A549 (cell line): ENCODE measurements at regions of chr11 and their contacts with region 1.

Region 1: DNA sequence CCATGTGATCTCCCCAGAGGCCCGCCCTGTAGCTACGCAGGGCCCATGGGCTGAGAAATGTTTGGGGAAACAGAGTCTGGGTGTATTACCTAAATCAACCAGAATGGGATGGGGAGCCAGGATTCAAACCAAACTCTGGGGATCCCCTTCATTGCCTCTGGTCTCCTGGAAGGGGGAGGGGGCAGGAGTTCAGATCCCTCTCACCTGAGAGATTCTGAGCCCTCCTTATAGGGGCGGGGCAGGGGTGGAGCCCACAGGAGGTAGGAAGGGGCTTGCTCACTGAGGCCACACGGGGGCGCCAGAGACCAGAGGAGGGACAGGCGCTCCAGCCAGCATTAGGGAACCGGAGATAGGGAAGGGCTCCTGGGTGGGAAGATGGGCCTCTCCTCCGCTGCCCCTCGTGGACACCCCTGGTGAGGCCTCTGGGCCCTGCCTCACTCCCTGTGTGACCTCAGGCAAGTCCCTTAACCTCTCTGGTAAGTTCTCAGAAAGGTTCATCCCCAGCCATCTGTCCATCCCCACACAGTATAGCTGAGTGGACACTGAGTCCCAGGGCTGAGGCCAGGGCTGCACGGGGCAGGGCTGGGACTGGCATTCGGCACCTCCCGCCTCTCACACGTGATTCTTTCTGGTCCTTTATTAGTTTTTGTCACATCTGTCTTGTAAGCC is 2.7 kb upstream of the CDC42BPG start:
- DNase-seq: peak; percentile 93 to 95
- ATAC-seq: peak; percentile 69 to 86
- H3K4me3 ChIP-seq: no peak overlapping the region
- H3K27ac ChIP-seq: peak overlapping the region; percentile 57 to 92
- H3K4me1 ChIP-seq: peaks cover 74% of the 10 kb centered on the region
- CTCF ChIP-seq: peak; percentile 98
- EP300 ChIP-seq: no peak
- POLR2A ChIP-seq: no peak
- RAD21 ChIP-seq: peak; percentile 99

Region 2: DNA sequence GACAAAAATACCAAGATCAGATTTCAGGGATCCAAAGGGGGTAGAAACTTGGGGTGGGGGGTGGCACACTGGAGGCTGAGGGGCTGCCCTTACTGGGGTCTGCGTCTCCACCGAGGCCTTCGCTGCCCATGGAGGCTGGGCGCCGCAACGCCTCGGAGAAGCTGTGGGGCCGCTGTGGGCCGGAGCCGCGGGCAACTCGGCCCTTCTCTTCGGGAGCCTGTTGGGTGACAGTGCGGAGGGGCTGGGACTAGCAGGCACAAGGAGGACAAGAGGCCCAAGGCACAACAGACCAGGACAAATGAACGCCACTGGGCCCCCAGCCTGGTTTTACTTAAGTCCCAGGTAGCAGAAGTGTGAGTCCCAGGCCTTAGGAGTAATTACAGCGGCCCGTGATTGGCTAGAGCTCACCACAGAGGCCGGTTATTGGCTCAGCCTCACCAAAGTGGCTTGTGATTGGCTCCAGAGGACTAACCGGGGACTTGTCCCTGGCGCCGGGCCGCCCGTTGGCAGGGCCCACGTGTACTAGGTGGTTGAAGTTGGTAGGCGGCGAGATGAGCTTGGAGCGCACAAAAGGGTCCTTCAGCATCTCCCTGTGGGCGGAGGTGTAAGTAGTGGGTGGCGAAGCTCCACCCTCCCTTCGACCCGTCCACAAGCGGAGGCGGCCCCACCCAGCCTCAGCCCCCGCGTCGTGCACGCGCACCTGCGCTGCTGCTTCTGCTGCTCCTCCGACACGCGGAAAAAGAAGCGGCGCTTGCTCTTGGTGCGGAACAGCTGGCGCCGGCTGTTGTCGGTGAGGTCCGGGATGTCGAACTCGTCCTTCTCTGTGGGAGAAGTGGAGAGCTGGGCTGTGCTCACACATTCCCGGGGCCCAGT is 20.3 kb before region 1 on chr11:
- CTCF ChIA-PET with region 1: interaction called, 13 read pairs
- POLR2A ChIA-PET with region 1: no interaction called
- DNase-seq: no peak
- ATAC-seq: peak in 1 of 2 experiments; percentile 54; a peak in 3 of 6 replicates
- H3K4me3 ChIP-seq: no peak overlapping the region
- H3K27ac ChIP-seq: no peak overlapping the region
- H3K4me1 ChIP-seq: no peaks in the 10 kb centered on the region
- CTCF ChIP-seq: no peak
- EP300 ChIP-seq: no peak
- POLR2A ChIP-seq: no peak
- RAD21 ChIP-seq: no peak

Region 3: GRCh38 chr11:64864473-64865285 is 17.5 kb after region 1 on chr11:
- CTCF ChIA-PET with region 1: interaction called, 462 read pairs
- POLR2A ChIA-PET with region 1: no interaction called
- DNase-seq: no peak
- ATAC-seq: no peak
- H3K4me3 ChIP-seq: no peak overlapping the region
- H3K27ac ChIP-seq: peak overlapping the region; percentile 22 to 73; a peak in 5 of 6 replicates
- H3K4me1 ChIP-seq: peaks cover 54% of the 10 kb centered on the region
- CTCF ChIP-seq: no peak
- EP300 ChIP-seq: no peak
- POLR2A ChIP-seq: no peak
- RAD21 ChIP-seq: no peak

Region 4: DNA sequence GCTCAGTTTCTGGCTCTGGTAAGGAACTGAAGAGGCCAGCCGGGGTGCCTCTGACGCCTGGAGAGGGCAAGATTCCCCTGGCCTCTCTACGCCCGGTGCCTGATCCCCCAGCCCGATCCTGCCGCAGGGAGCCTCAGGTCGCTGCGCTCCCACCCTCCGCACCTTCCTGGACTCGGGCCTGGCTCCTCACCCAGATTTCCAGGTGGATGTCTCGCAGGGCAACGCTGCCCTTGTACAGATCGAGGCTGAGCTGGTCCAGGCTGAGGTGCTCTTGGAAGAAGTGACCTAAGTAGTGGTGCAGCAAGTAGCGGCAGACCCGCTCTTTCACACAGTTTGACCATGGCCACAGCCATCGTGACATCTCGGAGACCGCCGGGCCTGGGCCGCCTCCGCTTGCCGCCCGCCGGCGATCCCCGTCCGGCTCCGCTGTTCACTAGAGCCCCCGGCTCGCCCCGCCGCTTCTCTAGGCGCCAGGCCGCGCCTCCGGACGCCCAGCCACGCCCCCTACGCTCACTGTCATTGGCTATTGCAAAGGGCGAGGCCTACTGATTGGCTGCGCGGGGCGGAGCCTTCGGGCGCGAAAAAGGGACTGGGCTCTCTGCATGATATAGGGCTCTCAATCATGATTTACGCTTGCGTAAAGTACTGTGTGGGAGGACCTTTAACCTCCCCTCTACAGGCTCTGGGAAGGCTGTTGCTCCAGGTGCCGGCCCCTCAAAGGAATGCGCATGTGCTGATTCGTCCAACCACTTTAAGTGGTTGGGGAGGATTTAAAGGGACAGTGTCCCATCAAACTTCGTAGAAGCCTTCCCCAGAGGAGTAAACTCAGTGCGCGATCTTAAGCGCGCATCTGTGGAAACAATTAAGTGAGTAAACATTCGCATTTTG is 69.9 kb after region 1 on chr11 and contains the start of gene ATG2A:
- CTCF ChIA-PET with region 1: interaction called, 11 read pairs
- POLR2A ChIA-PET with region 1: no interaction called
- DNase-seq: peak; percentile 99
- ATAC-seq: peak; percentile 91 to 97
- H3K4me3 ChIP-seq: peak within 1 kb of the TSS; percentile 70
- H3K27ac ChIP-seq: peak within 1 kb of the TSS; percentile 77 to 91
- H3K4me1 ChIP-seq: peaks cover 15% of the 10 kb centered on the region
- CTCF ChIP-seq: no peak
- EP300 ChIP-seq: no peak
- POLR2A ChIP-seq: peak; percentile 79
- RAD21 ChIP-seq: no peak
- polyA plus RNA-seq, gene ATG2A: 3.1 and 4.0 TPM in 2 replicates

Region 5: DNA sequence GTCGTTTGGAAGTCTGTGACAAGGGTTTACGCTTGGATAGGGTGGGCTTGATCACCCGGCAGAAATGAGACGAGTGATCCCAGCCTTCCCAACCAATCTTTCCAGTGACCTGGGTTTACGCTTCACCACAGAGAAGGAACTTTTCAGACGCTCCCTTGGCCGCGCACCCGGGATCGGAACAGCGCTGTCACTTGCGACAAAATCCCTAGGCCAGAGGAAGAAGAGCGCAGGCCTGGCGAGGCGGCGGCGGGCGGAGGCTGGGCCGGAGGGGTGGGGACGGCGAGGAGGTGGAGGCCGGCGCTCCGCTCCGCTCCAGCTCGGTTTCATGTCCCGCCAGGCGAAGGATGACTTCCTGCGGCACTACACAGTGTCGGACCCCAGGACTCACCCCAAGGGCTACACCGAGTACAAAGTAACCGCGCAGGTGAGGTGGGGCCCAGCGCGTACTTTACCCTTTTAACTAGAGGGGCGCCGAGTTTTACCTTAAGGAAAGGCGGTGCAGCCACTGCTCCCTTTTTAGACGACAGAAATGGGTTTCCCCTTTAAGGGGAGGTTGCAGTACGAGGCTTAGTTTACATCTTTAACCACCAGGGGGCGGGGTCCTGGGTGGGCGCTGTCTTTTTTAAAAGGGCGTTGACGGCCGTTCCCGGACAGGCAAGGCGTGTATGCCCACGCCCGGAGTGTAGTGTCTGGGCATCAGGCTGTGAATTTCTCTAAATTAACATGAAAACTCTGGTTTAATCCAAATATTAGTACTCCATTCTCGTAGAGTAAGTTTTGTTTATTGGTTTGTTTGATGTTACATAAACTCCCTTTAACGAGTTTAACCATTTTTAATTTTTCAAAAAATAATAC is 180.3 kb after region 1 on chr11 and contains the start of gene SNX15:
- CTCF ChIA-PET with region 1: interaction called, 12 read pairs
- POLR2A ChIA-PET with region 1: no interaction called
- DNase-seq: peak; percentile 92 to 97
- ATAC-seq: peak; percentile 95 to 97
- H3K4me3 ChIP-seq: peak within 1 kb of the TSS; percentile 52
- H3K27ac ChIP-seq: peak within 1 kb of the TSS; percentile 89 to 94
- H3K4me1 ChIP-seq: peaks cover 9% of the 10 kb centered on the region
- CTCF ChIP-seq: peak; percentile 52
- EP300 ChIP-seq: no peak
- POLR2A ChIP-seq: peak; percentile 80
- RAD21 ChIP-seq: peak; percentile 26 to 44; a peak in 3 of 5 replicates
- polyA plus RNA-seq, gene SNX15: 13.4 and 15.8 TPM in 2 replicates